ENCODE measurements at regions of chr1 and their contacts with region 1.

Region 1: GRCh38 chr1:192808518-192809306 is at the start of gene RGS2:
- DNase-seq: peak; percentile 91 to 95 (median 93)
- ATAC-seq: peak; percentile 96
- H3K4me3 ChIP-seq: peak within 1 kb of the TSS; percentile 39
- H3K4me1 ChIP-seq: peaks cover 3% of the 10 kb centered on the region
- CTCF ChIP-seq: no peak
- total RNA-seq, gene RGS2: 13.3 to 153 (median 35.4) TPM

Region 2: GRCh38 chr1:192477630-192478029 is 331.1 kb before region 1 on chr1:
- intact Hi-C with region 1: loop called in 1 of 2 experiments (anchors 10 kb)
- DNase-seq: no peak
- ATAC-seq: no peak
- H3K4me3 ChIP-seq: no peak overlapping the region
- H3K4me1 ChIP-seq: no peaks in the 10 kb centered on the region
- CTCF ChIP-seq: no peak

Region 3: GRCh38 chr1:192907545-192908243 is 99.0 kb after region 1 on chr1:
- intact Hi-C with region 1: loop called in 1 of 2 experiments (anchors 5 kb)
- DNase-seq: no peak
- ATAC-seq: peak; percentile 25
- H3K4me3 ChIP-seq: no peak overlapping the region
- H3K4me1 ChIP-seq: no peaks in the 10 kb centered on the region
- CTCF ChIP-seq: no peak

Region 4: GRCh38 chr1:193019442-193020026 is 210.8 kb after region 1 on chr1:
- intact Hi-C with region 1: loop called (anchors 5 to 10 kb)
- DNase-seq: peak in 1 of 3 donors; percentile 62
- ATAC-seq: peak; percentile 67
- H3K4me3 ChIP-seq: no peak overlapping the region
- H3K4me1 ChIP-seq: no peaks in the 10 kb centered on the region
- CTCF ChIP-seq: no peak

Region 5: DNA sequence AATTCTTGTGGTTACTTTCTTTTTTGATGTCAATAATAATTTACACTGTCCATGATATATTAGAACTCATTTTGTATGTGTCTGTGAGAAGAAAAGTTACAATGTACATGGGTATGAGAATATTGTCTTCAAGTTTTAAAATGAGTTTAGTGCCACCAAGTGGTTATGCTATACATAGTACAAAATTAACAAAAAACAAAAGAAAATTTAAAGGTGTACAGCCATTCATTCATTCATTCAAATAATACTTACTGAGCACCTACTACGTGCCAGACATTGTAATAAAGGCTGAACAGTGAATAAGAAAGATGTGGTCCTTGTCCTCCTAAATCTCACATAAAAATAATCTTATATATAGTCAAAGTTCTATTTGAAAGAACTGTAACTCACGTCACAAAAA is 222.7 kb after region 1 on chr1:
- intact Hi-C with region 1: loop called in 1 of 2 experiments (anchors 10 kb)
- DNase-seq: no peak
- ATAC-seq: no peak
- H3K4me3 ChIP-seq: no peak overlapping the region
- H3K4me1 ChIP-seq: no peaks in the 10 kb centered on the region
- CTCF ChIP-seq: no peak

Measured in mucosa of descending colon (tissue), 3 donors.